Mucosa of descending colon (tissue), 3 donors: ENCODE measurements at regions of chrX and their contacts with region 1.

Region 1: DNA sequence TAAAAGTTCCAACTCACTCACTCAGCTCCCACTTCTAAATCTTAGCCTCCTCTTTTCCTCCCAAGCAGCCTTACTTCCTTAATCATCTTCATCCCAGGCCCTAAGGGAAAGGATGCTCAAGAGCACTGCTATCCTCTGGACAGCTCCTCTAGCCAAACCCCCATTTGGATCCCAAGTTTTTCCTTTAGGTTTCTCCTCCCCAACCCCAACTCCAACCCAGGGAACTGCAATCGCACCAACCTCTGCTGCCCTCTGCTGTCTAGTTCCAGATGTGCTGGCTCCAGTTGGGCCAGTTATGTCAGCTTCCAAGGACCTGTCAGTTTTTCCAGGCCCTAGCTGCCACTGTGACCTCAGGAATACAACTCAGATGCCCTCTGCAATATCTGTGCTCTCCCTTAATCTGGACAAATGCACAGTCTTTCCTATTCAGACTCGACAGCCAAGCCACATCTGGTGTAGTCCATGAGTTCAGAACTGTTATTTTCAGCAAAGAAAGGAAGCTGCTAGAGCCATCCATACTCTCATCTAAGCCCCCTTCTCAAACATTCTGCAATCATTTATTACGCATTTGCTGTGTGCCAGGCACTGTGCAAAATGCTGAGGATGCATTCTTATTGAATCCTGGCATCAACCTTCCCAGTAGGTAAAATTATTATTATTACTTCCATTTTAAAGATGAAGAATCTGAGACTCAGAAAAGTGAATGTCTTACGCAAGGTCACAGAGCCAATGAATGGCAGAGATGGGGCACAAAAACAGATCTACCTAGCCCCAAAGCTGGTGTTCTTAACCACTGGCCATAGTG is 12.3 kb upstream of the XPNPEP2 start:
- DNase-seq: peak in 2 of 3 donors; percentile 72 to 79
- ATAC-seq: peak; percentile 77
- H3K4me3 ChIP-seq: no peak overlapping the region
- H3K4me1 ChIP-seq: no peaks in the 10 kb centered on the region
- CTCF ChIP-seq: peak; percentile 32

Region 2: DNA sequence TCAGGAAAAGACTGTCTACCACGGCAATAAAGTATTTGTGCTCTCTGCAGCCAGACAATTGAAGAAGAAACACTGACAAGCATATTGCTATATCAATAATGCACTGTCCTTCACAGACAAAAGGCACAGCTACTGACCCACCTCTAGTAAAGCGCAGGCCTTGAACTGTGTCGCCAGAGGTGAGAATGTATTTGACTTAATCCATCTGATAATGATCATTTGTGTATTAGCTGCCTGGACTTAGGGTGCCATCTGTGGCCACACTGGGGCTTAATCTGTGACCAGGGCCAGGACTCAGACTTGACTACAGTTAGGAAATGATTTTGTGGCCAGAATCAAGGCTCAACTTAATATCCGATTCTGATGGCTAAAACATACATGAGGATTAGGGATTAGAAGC is 463.6 kb before region 1 on chrX:
- intact Hi-C with region 1: no loop called
- DNase-seq: no peak
- ATAC-seq: no peak
- H3K4me3 ChIP-seq: no peak overlapping the region
- H3K4me1 ChIP-seq: no peaks in the 10 kb centered on the region
- CTCF ChIP-seq: no peak

Region 3: GRCh38 chrX:129606918-129607317 is 119.6 kb before region 1 on chrX:
- intact Hi-C with region 1: loop called (anchors 10 kb)
- DNase-seq: peak in 2 of 3 donors; percentile 36 to 76
- ATAC-seq: peak; percentile 78
- H3K4me3 ChIP-seq: no peak overlapping the region
- H3K4me1 ChIP-seq: peaks cover 5% of the 10 kb centered on the region
- CTCF ChIP-seq: peak; percentile 36

Region 4: DNA sequence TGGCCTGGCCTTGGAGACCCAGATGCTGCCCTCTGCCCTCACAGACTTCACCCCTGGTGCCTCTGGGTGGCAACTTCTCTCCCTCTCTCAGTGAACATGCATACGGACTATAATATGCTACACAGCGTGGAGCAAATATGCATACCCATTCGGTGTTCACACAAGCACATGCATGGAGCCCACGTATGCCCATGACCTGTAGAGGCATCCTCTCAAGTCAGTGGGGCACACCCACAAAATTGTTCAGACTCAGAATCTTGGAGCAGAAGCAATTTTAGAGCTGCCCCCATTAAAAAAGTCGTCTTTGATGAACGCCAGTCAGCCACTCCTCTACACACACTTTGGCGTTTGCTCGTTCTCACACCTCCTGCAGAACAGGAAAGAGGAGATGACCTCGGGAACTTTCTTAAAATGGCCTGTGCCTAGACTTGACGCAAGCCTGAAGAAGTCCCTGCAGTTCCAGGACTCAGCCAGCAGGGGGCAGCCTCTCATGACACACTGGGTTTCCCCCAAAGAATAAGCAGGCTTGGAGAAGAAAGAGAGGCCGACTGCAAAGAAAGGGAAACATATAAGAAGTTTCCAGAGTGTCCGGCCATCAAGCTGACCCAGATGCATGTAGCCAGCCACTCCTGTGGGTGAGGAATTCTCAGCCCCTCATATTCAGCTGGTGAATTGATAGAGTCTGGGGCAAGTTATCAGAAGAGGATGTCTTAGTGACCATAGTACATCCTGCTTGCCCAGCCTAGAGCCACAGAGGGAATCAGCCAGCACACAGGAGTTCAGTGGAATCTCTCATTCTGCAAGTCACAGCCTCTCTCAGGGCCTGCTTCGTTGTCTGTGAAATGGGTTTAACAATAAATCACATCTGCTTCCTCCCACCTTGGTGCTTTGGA is 89.0 kb before region 1 on chrX:
- intact Hi-C with region 1: loop called in 1 of 2 experiments (anchors 10 kb)
- DNase-seq: peak; percentile 71 to 79 (median 78)
- ATAC-seq: peak; percentile 80
- H3K4me3 ChIP-seq: no peak overlapping the region
- H3K4me1 ChIP-seq: no peaks in the 10 kb centered on the region
- CTCF ChIP-seq: peak; percentile 74